ENCODE measurements at regions of chr11 and their contacts with region 1.

Region 1: DNA sequence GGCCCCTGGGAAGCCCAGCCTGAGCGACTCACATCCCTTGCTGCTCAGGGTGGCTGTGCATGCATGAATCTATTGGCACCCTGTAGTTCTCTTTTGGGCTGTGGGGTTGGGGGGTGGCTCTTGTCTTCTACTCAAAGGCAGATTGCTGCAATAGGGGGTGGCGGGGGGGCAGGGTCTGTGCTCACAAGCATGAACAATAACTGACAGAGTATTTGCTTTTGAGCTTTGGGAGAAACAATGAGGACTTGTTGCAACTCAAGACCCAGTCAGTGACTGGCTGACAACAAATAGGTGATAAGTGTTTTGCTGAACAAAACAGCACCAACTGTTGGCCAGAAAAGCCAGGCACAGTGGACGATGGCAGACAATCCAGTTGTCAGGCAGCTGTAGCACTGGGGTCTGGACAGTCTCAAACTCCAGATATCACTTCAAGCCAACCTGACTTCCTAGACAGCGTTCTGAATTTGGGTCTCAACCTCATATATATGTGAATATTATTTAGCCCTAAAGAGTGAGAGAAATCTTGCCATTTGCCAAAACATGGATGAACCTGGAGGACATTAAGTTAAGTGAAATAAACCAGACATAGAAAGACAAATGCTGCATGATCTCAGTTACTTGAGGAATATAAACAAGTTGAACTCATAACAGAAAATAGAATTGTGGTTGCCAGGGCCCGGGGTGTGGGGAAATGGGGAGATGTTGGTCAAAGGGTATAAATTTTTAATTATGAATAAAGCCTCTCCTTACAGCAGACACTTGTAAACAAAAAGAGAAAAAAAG is 61.7 kb downstream of the ME3 start:
- DNase-seq: no peak
- H3K4me3 ChIP-seq: no peak overlapping the region
- H3K27ac ChIP-seq: no peak overlapping the region
- H3K4me1 ChIP-seq: peaks cover 0 to 23% of the 10 kb centered on the region in 2 donors
- H3K27me3 ChIP-seq: no peaks in the 10 kb centered on the region
- CTCF ChIP-seq: no peak
- POLR2A ChIP-seq: no peak

Region 2: DNA sequence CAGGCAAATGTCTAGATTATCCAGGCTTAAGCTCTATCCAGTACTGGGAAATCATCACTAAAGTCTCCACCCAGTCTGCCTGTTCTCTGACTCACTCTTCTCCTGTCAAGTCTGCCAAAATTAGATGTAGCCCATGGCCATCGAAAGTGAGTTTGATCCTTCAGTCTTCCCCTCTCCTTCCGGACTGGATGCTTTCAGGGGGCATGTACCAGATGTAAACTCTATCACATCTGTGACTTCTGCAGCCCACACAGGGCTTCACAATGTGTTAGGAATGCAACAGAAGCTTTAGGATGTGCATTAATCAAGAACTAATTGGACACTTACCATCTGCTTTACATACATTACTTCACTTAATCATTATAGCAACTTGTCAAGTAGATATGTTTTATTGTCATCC is 49.3 kb after region 1 on chr11:
- intact Hi-C with region 1: loop called in 1 of 2 experiments (anchors 10 kb)
- DNase-seq: no peak
- H3K4me3 ChIP-seq: no peak overlapping the region
- H3K27ac ChIP-seq: no peak overlapping the region
- H3K4me1 ChIP-seq: no peaks in the 10 kb centered on the region
- H3K27me3 ChIP-seq: no peaks in the 10 kb centered on the region
- CTCF ChIP-seq: no peak
- POLR2A ChIP-seq: no peak

Region 3: GRCh38 chr11:86818466-86819192 is 207.9 kb after region 1 on chr11:
- intact Hi-C with region 1: loop called in 1 of 2 experiments (anchors 10 kb)
- DNase-seq: no peak
- H3K4me3 ChIP-seq: no peak overlapping the region
- H3K27ac ChIP-seq: no peak overlapping the region
- H3K4me1 ChIP-seq: peaks cover 0 to 7% of the 10 kb centered on the region in 2 donors
- H3K27me3 ChIP-seq: no peaks in the 10 kb centered on the region
- CTCF ChIP-seq: peak; percentile 80 to 87 (median 83)
- POLR2A ChIP-seq: no peak

Measured in adrenal gland (tissue), 19 donors.